Activated CD4-positive, alpha-beta T cell treated with anti-CD3 and anti-CD28 coated beads for 36 hours (primary cell): ENCODE measurements at regions of chr12 and their contacts with region 1.

Region 1: DNA sequence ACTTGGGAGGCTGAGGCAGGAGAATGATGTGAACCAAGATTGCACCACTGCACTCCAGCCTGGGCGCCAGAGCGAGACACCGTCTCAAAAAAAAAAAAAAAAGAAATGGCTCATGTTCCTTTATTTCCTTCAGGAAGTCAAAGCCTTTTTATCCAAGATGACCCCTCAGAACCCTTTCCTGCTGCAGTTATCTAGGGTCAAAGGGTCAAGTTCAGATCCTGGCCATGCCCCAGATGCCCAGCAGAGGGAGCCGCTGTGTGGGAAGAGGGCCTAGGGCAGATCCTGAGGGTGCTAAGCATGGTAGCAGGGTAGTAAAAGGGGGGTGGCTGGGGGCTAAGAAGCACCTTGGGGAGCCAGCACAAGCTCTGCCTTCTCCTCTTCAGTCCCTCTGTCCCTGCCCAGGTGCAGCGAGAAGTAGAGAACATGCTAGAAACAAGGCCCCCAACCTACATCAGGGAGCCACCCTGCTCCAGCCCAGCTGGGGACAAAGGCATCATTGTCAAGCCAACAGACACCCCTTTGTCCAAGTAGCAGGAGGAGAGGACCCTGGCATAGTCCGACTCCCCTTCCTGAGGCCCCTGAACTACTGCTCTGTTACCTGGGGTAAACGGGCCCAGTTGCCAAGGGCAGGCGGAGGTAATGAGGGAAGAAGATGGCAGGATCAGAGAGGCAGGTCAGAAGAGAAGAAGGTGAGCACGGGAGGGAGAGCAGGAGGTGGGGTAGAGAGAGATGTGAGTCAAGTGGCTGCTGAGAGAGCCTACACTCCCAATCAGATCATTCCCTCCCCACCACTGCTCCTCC is 6.5 kb downstream of the NFE2 start:
- DNase-seq: peak; percentile 83
- ATAC-seq: peak; percentile 82
- H3K4me3 Mint-ChIP-seq: no peak overlapping the region
- H3K27ac Mint-ChIP-seq: no peak overlapping the region
- H3K4me1 Mint-ChIP-seq: peaks cover 5% of the 10 kb centered on the region
- H3K27me3 Mint-ChIP-seq: peaks cover 10% of the 10 kb centered on the region

Region 2: DNA sequence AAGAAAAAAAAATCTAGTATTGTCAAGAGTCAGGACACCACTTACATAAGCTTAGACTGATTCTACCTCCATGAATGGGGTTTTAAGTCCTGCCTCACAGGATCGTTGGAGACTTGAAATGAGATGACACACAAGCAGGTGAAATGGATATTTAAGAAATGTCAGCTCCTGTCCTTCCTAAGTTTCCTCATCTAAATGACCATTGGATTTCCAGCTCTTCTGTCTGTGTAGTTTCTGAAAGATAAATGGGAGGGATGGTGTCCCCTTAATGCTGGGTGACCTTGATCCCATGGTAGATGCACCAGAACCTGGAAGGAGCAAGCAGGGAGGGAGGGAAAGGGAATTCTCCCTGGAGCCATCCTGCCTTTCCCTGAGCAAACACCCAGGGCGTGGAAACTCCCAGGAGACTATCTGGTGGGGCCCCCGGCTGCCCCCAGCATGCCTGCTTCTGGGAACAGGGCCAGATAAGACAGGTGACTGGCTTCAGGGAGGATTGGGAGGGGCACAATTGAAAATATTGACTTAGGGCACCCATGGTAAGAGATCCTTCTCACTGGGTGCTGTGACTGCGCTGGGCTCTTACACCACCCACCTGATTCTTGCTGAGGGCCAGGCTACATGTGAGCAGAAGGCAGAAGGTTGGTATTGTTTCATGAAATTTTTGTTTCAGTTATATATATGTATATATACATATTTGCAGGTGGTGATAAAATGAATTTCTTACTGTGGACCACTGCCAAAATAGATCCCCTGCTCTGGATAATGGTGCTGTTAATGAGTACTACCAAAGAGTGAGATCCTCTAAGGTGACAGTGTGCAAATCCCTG is 1399.1 kb before region 1 on chr12:
- CTCF ChIA-PET with region 1: no interaction called
- POLR2A ChIA-PET with region 1: no interaction called
- intact Hi-C with region 1: no loop called
- DNase-seq: no peak
- ATAC-seq: no peak
- H3K4me3 Mint-ChIP-seq: no peak overlapping the region
- H3K27ac Mint-ChIP-seq: no peak overlapping the region
- H3K4me1 Mint-ChIP-seq: no peaks in the 10 kb centered on the region
- H3K27me3 Mint-ChIP-seq: no peaks in the 10 kb centered on the region

Region 3: GRCh38 chr12:53722450-53723041 is 571.8 kb before region 1 on chr12:
- CTCF ChIA-PET with region 1: no interaction called
- POLR2A ChIA-PET with region 1: no interaction called
- intact Hi-C with region 1: no loop called
- DNase-seq: no peak
- ATAC-seq: no peak
- H3K4me3 Mint-ChIP-seq: no peak overlapping the region
- H3K27ac Mint-ChIP-seq: no peak overlapping the region
- H3K4me1 Mint-ChIP-seq: peaks cover 12% of the 10 kb centered on the region
- H3K27me3 Mint-ChIP-seq: no peaks in the 10 kb centered on the region

Region 4: DNA sequence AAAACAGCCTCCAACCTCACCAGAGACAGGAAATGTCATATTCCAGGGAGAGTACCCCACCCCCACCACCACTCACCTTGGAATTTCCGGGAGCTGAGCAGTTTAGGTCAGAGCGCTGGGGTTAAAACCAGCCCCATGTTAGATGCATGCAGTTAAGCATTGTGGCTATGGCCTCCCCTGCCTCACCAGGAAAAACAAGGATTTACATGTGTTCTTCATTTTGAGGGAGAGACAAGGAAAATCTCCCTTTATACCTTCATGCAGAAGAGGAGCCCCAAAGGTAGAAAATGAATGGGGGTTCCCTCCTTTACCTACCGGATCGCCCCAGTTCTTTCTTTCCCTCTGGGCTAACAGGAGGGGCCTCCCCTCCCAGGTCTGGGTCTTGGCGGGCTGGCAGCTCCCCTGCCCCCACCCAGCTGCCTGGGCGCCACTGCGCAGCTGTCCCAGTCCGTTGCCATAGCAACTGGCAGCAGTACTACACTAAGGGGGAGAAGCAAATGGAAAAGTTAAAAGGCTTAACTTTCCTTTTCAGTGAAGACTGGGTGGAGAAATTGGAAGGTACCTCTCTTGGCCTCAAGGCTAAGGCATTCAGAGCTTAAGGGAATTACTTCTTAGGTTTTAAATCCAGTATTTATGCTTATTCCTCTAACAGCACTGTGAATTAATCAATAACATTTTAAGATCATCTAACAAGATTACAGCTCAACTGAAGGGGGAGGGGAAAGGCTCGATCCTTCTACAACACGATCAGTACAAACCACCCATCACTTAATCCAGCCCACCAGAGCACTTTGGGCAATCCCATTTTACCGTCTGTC is 34.9 kb before region 1 on chr12:
- CTCF ChIA-PET with region 1: interaction called, 10 read pairs
- POLR2A ChIA-PET with region 1: no interaction called
- intact Hi-C with region 1: no loop called
- DNase-seq: peak; percentile 68
- ATAC-seq: peak; percentile 81
- H3K4me3 Mint-ChIP-seq: peak overlapping the region; percentile 59
- H3K27ac Mint-ChIP-seq: peak overlapping the region; percentile 49
- H3K4me1 Mint-ChIP-seq: peaks cover 39% of the 10 kb centered on the region
- H3K27me3 Mint-ChIP-seq: no peaks in the 10 kb centered on the region